Sciatic nerve (tissue), 2 donors: ENCODE measurements at regions of chr1 and their contacts with region 1.

Region 1: DNA sequence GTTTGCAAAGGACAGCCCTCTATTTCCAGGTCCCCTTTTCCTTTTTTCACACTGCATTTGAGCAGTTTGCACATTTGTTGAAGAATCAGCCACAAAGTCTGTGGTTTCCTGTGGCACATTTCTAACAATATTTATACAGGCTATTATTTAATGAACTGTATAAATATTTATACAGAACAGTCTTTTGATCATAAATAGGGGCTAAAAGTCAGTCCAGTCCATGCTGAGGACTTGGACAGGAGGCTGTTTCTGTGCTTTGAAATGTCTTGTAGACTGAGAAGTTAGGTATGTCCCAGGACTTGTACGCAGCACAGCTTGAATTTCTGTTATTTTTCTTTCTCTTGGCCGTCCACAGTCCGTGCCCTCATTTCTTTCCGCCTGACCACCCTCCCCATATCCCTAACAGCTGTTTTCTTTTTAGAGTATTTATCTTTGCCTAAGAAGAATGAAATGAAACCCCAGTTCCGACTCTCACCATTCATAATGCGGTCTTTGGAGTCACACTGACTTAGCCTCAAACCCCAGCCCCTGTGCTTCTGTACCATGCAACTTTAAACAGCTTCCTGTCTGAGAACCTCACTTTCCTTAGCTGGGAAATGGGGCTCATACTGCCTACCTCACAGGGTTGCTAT is 19.7 kb downstream of the FGGY start:
- DNase-seq: no peak
- ATAC-seq: peak; percentile 66

Region 2: DNA sequence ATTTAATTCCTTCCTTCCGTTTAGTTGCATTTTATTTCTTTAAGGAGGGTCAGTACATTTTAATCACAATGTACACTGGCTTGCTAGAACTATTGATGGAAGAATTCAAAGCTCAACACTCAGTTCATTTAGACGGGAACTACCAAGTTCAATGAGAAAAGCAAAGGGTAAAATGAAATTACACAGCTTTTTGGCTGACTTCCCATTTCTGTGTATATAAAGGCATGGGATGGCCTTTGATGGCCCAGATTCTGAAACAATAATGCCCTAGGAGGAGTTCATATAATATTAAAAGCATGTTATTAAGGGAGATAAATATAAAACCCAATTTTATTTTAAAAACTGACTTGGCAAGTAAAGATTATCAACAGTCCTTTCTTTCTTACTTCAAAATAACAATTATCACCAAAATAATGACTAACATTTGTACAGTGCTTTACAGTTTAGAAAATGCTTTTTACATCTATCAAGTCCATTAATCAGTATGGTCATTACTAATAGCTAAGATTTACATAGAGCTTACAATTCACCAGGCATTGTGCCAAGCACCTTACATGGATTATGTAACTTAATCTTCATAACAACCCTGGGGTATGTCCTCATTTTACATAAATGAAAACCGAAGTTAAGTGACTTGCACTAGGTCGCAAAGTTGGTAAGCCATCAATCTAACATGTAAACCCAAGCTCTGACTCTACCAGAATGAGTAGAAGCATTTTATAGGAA is 1172.5 kb before region 1 on chr1:
- intact Hi-C with region 1: loop called (anchors 10 kb)
- DNase-seq: no peak
- ATAC-seq: no peak